AG04449 (cell line): ENCODE measurements at regions of chr12 and their contacts with region 1.

Region 1: GRCh38 chr12:77049767-77050353 is 15.5 kb downstream of the E2F7 start:
- DNase-seq: no peak
- H3K4me3 ChIP-seq: no peak overlapping the region
- CTCF ChIP-seq: peak; percentile 66

Region 2: DNA sequence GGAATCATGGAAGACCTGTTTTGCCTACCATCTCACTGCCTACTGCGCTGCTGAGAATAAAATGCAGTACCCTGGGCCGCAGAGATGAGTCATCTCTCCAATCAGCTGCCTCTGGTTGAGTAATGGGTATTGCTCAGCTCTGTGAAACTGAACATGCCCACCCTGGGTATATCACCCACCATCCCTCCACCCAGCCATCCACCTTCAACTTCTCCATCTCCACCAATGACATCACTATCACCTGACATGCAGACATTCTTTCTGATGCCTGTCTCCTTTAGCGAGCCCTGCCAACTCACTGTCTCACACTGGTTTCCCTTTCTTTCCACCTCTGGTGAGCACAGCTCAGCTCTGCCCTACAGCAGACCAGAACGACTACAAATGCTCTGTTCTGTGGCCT is 18.1 kb before region 1 on chr12:
- CTCF ChIA-PET with region 1: interaction called, 38 read pairs
- POLR2A ChIA-PET with region 1: no interaction called
- DNase-seq: no peak
- H3K4me3 ChIP-seq: no peak overlapping the region
- CTCF ChIP-seq: no peak

Region 3: GRCh38 chr12:77065361-77066204 is 15.7 kb after region 1 on chr12 and contains the start of gene E2F7:
- CTCF ChIA-PET with region 1: interaction called, 81 read pairs
- POLR2A ChIA-PET with region 1: no interaction called
- DNase-seq: no peak
- H3K4me3 ChIP-seq: peak within 1 kb of the TSS; percentile 73
- CTCF ChIP-seq: no peak

Region 4: GRCh38 chr12:77685112-77685511 is 635.3 kb after region 1 on chr12:
- CTCF ChIA-PET with region 1: interaction called, 47 read pairs
- POLR2A ChIA-PET with region 1: no interaction called
- DNase-seq: peak; percentile 49
- H3K4me3 ChIP-seq: no peak overlapping the region
- CTCF ChIP-seq: peak; percentile 69